ENCODE measurements at regions of chr1 and their contacts with region 1.

Region 1: GRCh38 chr1:6393400-6394187 is at the start of gene ACOT7:
- DNase-seq: peak; percentile 83 to 92
- ATAC-seq: peak; percentile 88
- total RNA-seq, gene ACOT7: 50.4 to 58.0 TPM

Region 2: GRCh38 chr1:6300342-6301048 is 93.1 kb before region 1 on chr1:
- intact Hi-C with region 1: no loop called
- DNase-seq: peak; percentile 67 to 75
- ATAC-seq: peak; percentile 90

Region 3: GRCh38 chr1:6343506-6344405 is 49.8 kb before region 1 on chr1:
- intact Hi-C with region 1: loop called in 1 of 2 experiments (anchors 10 kb)
- DNase-seq: peak; percentile 83 to 86
- ATAC-seq: peak; percentile 83

Measured in left colon (tissue), 2 donors.